Activated naive CD8-positive, alpha-beta T cell treated with anti-CD3 and anti-CD28 coated beads, Interleukin-2, amount 10 ng/mL, durations not matched to agents 7 days and 5 days (primary cell): ENCODE measurements at regions of chr22 and their contacts with region 1.

Region 1: DNA sequence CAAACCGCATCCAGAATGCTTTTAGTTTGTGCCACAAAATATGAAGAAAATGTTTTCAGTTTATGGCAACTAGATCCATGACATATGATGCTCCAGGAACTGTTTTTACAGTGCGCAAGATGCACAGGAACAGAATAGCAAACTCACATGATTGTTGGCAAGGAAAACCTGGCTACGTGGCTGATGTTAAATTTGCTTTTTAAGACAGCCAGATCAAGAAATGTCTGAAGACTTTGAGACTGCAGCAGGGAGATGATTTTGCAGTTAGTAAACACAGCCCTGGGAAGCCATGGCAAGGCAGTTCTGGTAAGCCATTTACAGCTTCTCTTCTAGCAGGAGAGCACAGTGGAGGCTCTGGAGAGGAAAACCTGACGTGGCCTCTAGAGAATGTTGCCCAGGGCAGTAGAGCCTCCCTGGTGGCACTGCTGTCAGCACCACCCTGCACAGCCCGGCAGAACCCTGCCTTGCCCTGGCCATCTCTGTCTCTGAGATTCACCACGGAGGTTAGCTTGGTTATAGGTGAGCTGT is 69.8 kb upstream of the TNRC6B start:
- DNase-seq: peak; percentile 52
- ATAC-seq: peak; percentile 88
- H3K4me3 Mint-ChIP-seq: peak overlapping the region; percentile 82
- H3K27ac Mint-ChIP-seq: peak overlapping the region; percentile 91
- H3K4me1 Mint-ChIP-seq: peaks cover 52% of the 10 kb centered on the region
- H3K27me3 Mint-ChIP-seq: no peaks in the 10 kb centered on the region

Region 2: DNA sequence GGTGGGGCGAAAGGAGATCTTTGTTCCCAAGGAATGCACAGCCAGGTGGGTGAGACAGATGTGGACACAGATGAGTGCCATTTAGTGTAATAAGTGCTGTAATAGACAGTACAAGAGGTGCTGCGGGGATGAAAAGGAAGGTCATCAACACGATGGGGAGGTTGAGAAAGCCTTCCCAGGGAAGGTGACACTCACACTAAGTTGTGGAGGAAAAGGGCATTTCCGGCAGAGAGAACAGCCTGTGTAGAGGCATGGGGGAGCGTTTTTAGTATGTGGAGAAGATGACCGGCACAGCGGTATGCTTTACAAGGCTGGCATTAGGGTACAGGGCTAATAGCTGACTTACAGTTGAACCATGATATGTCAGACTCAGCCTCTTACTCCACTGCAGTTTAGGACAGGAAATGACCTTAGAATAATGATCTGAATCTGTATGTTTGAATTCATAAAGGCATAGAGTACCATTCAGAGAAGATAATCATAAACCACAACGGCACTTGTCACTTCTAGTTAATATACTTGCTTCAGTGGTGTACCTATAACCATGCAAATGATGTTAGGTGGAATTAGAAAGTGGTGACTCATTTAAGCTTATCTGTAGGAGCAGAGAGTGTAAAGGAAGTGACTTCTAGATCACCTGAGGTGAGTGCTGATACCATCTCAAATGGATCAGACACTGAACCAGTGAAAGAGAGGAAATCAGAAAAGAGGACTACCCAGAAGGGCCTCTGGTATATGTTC is 52.6 kb before region 1 on chr22:
- POLR2A ChIA-PET with region 1: interaction called, 13 read pairs
- DNase-seq: no peak
- ATAC-seq: peak; percentile 91
- H3K4me3 Mint-ChIP-seq: peak overlapping the region; percentile 84
- H3K27ac Mint-ChIP-seq: peak overlapping the region; percentile 96
- H3K4me1 Mint-ChIP-seq: peaks cover 68% of the 10 kb centered on the region
- H3K27me3 Mint-ChIP-seq: no peaks in the 10 kb centered on the region

Region 3: GRCh38 chr22:40076702-40077645 is 30.9 kb before region 1 on chr22:
- POLR2A ChIA-PET with region 1: no interaction called
- DNase-seq: no peak
- ATAC-seq: peak; percentile 22
- H3K4me3 Mint-ChIP-seq: peak overlapping the region; percentile 78
- H3K27ac Mint-ChIP-seq: peak overlapping the region; percentile 78
- H3K4me1 Mint-ChIP-seq: peaks cover 40% of the 10 kb centered on the region
- H3K27me3 Mint-ChIP-seq: no peaks in the 10 kb centered on the region

Region 4: GRCh38 chr22:40147388-40148176 is 39.7 kb after region 1 on chr22:
- POLR2A ChIA-PET with region 1: no interaction called
- DNase-seq: no peak
- ATAC-seq: no peak
- H3K4me3 Mint-ChIP-seq: no peak overlapping the region
- H3K27ac Mint-ChIP-seq: no peak overlapping the region
- H3K4me1 Mint-ChIP-seq: peaks cover 3% of the 10 kb centered on the region
- H3K27me3 Mint-ChIP-seq: no peaks in the 10 kb centered on the region